Tibial artery (tissue), 4 donors: ENCODE measurements at regions of chr7 and their contacts with region 1.

Region 1: DNA sequence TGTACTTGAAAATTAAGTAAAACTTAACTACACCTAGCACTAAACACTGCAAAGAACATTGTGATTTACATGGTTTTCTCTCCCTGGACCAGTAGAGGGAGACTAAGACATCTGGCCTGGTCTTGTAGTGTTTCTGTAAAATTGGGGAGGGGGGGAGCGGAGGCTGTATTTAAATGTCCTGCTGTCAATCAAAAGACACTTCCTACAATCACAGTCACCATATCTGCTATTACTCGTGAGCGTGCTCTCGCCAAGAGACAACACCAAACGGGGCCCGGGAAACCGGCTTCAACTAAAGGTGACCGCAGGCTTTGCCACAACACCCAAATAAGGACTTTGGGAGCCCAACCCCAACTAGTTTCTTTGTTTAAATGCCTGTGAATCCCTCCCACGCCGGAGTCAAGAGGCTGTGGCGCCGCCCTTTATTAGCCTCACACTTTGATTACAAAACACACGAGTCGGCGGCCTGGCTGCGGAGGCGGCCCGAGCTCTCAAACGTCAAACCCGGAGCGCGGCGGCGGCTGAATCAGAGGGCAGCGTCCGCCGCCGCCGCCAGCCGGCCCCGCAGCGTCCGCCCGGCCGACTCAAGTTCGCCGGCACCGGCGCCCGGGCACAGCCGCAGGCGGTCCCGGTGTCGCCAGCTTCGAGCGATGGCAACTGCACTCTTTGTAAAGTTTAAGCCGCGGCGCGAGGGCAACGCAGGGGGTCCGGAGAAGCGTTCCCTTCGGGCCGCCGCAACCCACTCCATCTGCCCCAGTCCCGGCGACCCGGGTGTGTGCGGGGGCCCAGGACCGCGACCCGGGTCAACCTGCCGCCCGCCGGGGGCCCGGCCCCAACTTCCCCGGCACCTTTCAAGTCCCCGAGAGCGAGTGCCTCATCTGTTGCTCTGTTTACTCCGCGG is 1.3 kb downstream of the KDM7A start:
- DNase-seq: peak; percentile 96 to 97
- H3K4me3 ChIP-seq: peak overlapping the region; percentile 92 to 99
- H3K27ac ChIP-seq: peak overlapping the region; percentile 100
- H3K4me1 ChIP-seq: peaks cover 0 to 19% (median 7%) of the 10 kb centered on the region in 4 donors
- H3K27me3 ChIP-seq: no peaks in the 10 kb centered on the region
- CTCF ChIP-seq: peak; percentile 78 to 87

Region 2: DNA sequence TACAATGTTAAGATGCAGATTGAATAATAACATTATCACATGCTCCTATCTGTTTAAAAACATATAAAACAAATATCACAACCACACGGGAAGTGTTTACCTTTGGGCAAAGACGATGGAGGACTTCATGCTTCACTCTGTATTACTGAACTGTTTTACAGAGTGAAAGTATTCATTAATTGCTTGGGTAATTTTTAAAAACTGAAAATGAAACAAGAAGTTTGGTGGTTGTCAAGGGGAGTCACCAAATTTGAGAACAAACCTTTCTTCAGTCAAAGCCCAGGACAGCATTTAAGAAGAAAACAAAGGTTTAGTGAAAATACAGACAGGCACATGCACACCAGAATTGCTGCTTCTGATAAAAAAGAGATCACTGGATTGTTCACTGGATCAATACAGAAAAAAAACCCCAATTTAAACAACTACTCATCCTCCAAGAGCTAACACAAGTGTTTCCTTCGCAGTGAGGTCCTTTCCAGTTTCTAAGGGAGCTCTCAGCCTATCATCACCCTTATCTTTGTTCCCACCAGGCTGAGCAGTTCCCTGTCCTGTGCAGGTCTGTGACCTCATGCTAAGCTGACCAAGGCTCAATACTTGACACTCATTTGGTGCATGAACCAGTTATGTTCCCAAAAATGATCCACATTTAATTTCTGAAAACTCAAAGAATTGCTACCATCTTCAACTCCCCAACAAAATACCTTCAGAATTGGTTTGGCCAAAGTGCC is 121.5 kb before region 1 on chr7:
- intact Hi-C with region 1: no loop called
- DNase-seq: no peak
- H3K4me3 ChIP-seq: no peak overlapping the region
- H3K27ac ChIP-seq: no peak overlapping the region
- H3K4me1 ChIP-seq: peaks cover 0 to 21% (median under 1%) of the 10 kb centered on the region in 4 donors
- H3K27me3 ChIP-seq: no peaks in the 10 kb centered on the region
- CTCF ChIP-seq: no peak

Region 3: DNA sequence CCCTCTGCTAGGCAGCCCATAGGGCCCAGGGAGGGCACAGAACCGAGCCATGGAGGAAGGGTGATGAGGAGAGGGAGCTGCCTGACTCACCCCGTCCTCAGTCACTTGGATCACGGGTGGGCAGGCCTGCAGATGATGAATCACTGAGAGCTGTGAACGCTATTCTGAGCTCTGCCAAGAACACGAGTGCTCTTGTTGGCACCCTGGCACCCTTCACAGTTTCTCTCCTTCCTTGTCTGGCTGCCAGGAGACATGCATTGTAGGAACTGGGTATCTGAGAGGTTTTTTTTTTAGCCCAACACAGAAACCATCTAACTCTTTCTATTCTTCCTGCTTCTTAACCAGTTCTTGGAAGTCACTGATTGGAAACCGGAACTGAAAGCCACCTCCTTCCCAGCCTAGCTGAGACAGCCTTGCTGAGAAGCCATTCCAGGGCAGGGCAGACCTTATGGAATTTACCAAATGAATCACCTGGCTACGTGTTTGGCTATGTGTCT is 140.7 kb after region 1 on chr7:
- intact Hi-C with region 1: loop called (anchors 5 kb)
- DNase-seq: peak; percentile 91 to 94
- H3K4me3 ChIP-seq: peak overlapping the region; percentile 23 to 24
- H3K27ac ChIP-seq: peak overlapping the region; percentile 74 to 77
- H3K4me1 ChIP-seq: peaks cover 0 to 19% (median 17%) of the 10 kb centered on the region in 4 donors
- H3K27me3 ChIP-seq: no peaks in the 10 kb centered on the region
- CTCF ChIP-seq: no peak